ENCODE measurements at regions of chrX and their contacts with region 1.

Region 1: GRCh38 chrX:40097497-40098263 is at the start of gene BCOR:
- DNase-seq: peak; percentile 60 to 85 (median 67)
- H3K4me3 ChIP-seq: peak within 1 kb of the TSS; percentile 51
- H3K4me3 Mint-ChIP-seq: peak within 1 kb of the TSS; percentile 90 to 99 (median 92)
- H3K27ac ChIP-seq: peak within 1 kb of the TSS; percentile 43
- H3K27ac Mint-ChIP-seq: peak within 1 kb of the TSS; percentile 84 to 99 (median 94)
- H3K4me1 ChIP-seq: peaks cover 20% of the 10 kb centered on the region
- H3K4me1 Mint-ChIP-seq: peaks cover 21 to 30% (median 24%) of the 10 kb centered on the region in 3 donors
- H3K27me3 ChIP-seq: no peaks in the 10 kb centered on the region
- H3K27me3 Mint-ChIP-seq: peaks cover 0 to 30% of the 10 kb centered on the region in 2 donors
- total RNA-seq, gene BCOR: 62.6 to 67.7 TPM

Region 2: DNA sequence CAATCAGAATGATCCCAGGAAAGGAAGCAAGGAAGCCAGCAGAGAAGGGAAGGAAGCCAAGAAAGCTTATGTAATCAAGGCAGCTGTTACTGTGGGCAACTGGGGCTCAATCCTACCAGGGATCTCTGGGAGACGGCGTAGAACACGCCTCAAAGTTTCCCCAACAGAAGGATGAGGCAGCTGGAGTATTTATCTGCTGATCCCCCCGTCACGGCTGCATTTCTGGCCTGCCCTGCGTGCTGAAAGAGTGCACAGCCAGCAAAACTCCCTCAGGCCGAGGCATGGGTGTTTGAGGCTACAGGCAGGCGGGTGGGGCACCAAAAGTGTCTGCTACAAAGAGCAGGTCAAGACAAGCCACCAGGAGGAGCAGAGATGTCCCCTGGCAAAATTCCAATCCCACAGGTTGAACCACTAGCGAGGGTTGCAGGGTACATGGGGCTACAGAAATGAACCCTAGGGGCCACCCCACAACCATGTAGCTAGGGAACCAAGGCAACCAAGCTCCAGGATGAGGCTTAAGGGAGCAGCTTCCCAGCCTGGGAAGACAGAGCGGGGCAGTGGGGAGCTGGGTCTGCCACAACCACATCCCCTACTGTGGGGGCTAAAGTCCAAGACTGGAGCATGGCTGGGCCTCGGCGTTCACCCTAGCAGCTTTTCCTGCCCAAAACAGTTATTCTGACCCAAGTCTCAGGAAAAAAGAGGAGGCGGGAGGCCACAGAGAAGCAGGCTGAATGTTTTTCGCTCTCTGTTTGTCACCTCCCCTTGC is 113.3 kb before region 1 on chrX:
- CTCF ChIA-PET with region 1: no interaction called
- POLR2A ChIA-PET with region 1: no interaction called
- DNase-seq: no peak
- H3K4me3 ChIP-seq: no peak overlapping the region
- H3K4me3 Mint-ChIP-seq: no peak overlapping the region
- H3K27ac ChIP-seq: no peak overlapping the region
- H3K27ac Mint-ChIP-seq: no peak overlapping the region
- H3K4me1 ChIP-seq: no peaks in the 10 kb centered on the region
- H3K4me1 Mint-ChIP-seq: no peaks in the 10 kb centered on the region
- H3K27me3 ChIP-seq: no peaks in the 10 kb centered on the region
- H3K27me3 Mint-ChIP-seq: peaks cover 0 to 8% of the 10 kb centered on the region in 2 donors

Region 3: DNA sequence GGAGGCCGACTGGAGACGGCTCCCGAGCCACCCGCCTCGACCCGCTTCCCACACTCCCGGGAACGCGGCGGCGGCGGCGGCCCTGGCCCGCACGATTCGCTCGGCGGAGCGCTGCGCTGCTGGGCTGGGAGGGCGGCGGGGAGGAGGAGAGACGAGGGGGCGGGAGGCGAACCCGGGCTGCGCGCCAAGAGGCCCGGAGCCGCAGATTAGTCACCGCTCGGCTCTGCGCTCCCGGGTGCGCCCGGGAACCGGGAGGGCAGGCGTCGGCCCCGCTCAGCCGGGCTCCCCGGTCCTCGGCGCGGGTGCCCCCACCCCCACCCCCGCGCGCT is 11.2 kb after region 1 on chrX:
- CTCF ChIA-PET with region 1: interaction called, 6 read pairs
- POLR2A ChIA-PET with region 1: interaction called, 25 read pairs
- DNase-seq: peak; percentile 52 to 79 (median 57)
- H3K4me3 ChIP-seq: peak overlapping the region; percentile 37
- H3K4me3 Mint-ChIP-seq: peak overlapping the region in 5 of 7 donors; percentile 50 to 83 (median 60)
- H3K27ac ChIP-seq: peak overlapping the region; percentile 47
- H3K27ac Mint-ChIP-seq: no peak overlapping the region
- H3K4me1 ChIP-seq: peaks cover 4% of the 10 kb centered on the region
- H3K4me1 Mint-ChIP-seq: peaks cover 10 to 18% (median 12%) of the 10 kb centered on the region in 3 donors
- H3K27me3 ChIP-seq: no peaks in the 10 kb centered on the region
- H3K27me3 Mint-ChIP-seq: peaks cover 0 to 32% of the 10 kb centered on the region in 2 donors

Region 4: DNA sequence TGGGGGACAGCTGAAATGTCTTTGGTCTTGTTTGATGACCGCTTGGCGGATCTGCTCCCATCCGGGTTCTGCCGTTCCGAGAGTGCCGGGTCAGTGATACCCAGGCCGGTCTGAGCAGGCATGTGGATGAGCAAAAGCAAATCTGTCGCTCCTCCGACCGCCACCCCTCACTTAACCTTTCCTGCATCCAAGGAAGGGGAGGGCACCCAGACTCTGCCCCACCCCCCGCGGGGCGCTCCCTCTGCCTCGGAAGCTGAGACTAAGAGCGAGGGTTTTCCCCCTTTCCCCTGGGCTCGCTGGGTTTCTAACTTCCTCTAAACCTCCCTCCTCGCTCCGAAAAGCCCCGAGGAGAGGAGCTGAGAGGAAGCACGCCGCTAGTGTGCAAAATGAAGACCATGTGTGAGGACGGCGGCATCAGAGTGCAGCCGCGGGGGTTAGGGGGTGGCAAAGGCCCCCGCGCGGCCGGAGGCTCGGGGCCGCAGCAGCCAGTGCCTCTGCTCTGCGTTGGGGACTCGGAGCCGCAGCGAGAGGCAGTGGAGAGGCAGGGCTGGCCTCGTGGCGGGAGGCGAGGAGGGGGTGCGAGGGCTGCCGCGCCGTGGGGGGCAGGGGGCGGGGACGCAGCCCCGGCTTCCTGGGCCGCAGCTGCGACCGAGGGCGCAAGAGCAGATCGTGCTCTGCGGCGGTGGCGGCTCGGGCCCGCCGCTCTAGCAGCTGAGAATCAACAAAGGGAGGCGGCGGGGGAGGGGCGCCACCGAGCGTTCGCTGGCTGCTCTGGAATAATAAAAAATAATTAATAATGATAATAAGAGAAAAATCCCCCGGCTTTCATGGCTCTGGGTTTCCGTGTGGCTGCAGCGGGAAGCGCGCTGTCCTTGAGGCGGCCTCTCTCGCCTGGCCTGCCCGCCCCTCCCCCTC is 55.9 kb after region 1 on chrX:
- CTCF ChIA-PET with region 1: interaction called, 10 read pairs
- POLR2A ChIA-PET with region 1: interaction called, 5 read pairs
- DNase-seq: peak; percentile 35 to 72 (median 53)
- H3K4me3 ChIP-seq: peak overlapping the region; percentile 53
- H3K4me3 Mint-ChIP-seq: peak overlapping the region; percentile 78 to 92 (median 84)
- H3K27ac ChIP-seq: peak overlapping the region; percentile 59
- H3K27ac Mint-ChIP-seq: peak overlapping the region in 4 of 8 donors; percentile 47 to 75 (median 72)
- H3K4me1 ChIP-seq: no peaks in the 10 kb centered on the region
- H3K4me1 Mint-ChIP-seq: peaks cover 14 to 20% (median 18%) of the 10 kb centered on the region in 3 donors
- H3K27me3 ChIP-seq: no peaks in the 10 kb centered on the region
- H3K27me3 Mint-ChIP-seq: peaks cover 0 to 36% of the 10 kb centered on the region in 2 donors

Region 5: DNA sequence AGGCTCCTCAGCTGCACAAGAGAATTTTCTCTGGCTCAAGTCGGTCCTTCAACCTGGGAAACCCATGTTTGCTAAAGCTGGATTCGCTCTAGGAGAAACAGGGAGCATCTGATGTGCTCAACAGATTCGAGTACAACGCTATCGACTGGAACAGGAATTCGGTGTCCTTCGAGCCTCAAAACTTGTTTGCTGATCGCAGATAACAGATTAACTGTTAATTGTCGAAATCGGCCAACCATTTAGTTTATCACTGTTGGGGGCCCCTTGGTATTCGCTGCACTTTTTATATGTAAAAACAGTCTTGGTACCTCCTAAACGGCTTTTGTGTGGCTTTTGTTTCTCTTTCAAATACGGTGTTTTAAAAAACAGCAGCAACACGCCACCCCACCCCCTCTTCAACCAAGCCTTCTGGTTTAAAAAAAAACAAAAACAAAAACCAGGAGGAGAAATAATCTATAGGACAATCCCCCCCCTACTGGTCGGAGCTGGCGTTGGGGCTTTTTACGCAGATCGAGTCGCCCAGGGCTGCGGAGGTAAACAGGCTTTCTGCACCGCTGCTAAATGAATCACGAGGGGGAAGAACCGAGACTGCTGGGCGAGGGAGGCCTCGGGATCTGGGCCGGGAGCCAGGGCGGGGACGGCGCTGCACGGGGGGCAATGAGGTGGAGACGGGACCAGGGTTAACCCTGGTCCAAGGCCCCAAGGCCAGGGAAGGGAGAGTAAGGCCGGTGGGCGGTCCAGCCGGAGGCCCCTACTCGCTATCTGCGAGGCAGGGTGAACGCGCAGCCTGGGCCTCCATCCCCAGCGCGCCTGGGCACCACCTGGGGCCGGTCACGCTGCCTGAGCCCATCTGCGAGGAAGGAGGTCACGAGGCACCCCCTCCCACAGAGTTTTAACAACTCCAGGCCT is 71.8 kb after region 1 on chrX:
- CTCF ChIA-PET with region 1: interaction called, 6 read pairs
- POLR2A ChIA-PET with region 1: interaction called, 50 read pairs
- DNase-seq: peak; percentile 57 to 89 (median 76)
- H3K4me3 ChIP-seq: peak overlapping the region; percentile 50
- H3K4me3 Mint-ChIP-seq: peak overlapping the region; percentile 79 to 94 (median 84)
- H3K27ac ChIP-seq: peak overlapping the region; percentile 89
- H3K27ac Mint-ChIP-seq: peak overlapping the region; percentile 92 to 100 (median 98)
- H3K4me1 ChIP-seq: peaks cover 34% of the 10 kb centered on the region
- H3K4me1 Mint-ChIP-seq: peaks cover 46 to 55% (median 52%) of the 10 kb centered on the region in 3 donors
- H3K27me3 ChIP-seq: no peaks in the 10 kb centered on the region
- H3K27me3 Mint-ChIP-seq: peaks cover 0 to 50% of the 10 kb centered on the region in 2 donors

Region 6: DNA sequence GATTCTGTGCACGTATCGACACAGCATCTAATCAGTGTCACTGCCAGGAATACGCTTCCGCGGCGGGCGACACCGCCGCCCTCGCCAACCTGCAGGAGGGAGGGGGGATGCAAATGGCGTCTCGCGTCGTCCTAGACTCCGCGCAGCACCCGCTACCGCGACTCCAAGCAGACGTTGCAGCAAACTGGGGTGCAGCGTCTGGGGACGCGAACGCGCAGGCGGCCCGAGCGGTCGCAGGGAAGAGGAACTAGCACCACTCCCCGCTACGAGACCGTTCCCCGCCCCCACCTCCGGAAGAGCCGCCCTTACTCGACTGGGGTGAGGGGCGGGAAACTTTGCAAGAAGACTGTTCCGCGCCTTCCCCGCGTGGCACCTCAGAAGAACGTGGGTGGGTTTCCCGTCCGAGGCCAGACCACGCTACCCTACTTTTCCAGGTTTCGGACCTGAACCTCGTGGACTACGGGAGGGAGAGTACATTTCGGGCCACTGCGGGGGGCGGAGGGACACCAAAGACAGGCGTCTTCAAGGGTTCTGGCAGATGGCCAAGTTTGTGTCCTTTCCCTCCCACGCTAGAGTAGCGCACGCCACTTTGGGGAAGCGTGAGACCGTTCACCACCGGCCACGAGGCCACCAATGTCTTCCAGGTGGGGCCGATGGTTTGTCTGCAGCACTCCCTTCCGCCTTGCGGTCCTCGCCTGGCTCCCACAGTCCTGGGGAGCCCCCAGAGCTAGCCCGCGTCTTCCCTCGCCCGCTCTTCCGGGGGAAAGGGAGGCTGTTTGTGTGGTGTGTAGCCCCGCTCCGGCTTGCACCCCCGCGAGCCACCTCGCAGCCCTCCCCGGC is 78.1 kb after region 1 on chrX:
- CTCF ChIA-PET with region 1: interaction called, 6 read pairs
- POLR2A ChIA-PET with region 1: interaction called, 50 read pairs
- DNase-seq: peak; percentile 57 to 89 (median 81)
- H3K4me3 ChIP-seq: peak overlapping the region; percentile 72
- H3K4me3 Mint-ChIP-seq: peak overlapping the region; percentile 83 to 95 (median 91)
- H3K27ac ChIP-seq: peak overlapping the region; percentile 89
- H3K27ac Mint-ChIP-seq: peak overlapping the region; percentile 95 to 99 (median 98)
- H3K4me1 ChIP-seq: peaks cover 24% of the 10 kb centered on the region
- H3K4me1 Mint-ChIP-seq: peaks cover 35 to 41% (median 37%) of the 10 kb centered on the region in 3 donors
- H3K27me3 ChIP-seq: no peaks in the 10 kb centered on the region
- H3K27me3 Mint-ChIP-seq: peaks cover 0 to 36% of the 10 kb centered on the region in 2 donors